Gastrocnemius medialis (tissue), 4 donors: ENCODE measurements at regions of chr16 and their contacts with region 1.

Region 1: DNA sequence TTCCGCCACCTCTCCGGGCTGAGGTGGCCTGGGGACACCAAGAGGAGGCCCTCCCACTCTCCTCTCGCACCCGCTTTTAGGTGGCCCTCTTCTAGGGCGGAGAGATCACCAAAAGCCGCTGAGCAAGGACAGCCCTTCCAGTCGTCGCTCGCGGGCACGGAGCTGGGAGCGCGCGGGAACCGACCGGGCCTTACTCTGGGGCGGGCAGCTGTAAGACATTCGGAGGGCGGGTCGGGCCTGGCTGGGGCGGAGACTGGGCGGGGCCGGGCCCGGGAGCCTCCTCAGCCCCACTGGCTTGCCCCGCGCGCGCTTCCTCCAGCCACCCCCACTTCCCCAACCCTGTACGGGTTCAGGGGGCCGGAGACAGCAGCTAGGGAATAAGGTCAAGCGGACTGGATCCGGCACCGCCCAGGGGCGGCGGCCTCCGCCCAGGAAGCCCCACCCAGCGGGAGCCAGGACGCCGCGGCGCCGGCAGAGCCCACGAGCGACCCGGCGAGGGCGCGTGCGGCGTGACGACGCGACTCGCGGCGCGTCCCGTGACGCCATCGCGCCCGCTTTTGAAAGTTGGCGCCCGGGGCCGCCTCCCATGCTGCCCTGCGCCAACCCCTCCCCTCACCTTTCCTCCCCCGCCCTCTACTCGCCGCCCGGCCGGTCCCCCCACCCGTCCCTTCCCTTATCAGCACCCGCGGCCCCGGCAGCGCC is 351 bp upstream of the CTCF start:
- DNase-seq: peak; percentile 96
- ATAC-seq: peak; percentile 71 to 76
- H3K4me3 ChIP-seq: peak overlapping the region; percentile 69 to 97 (median 80)
- H3K27ac ChIP-seq: peak overlapping the region; percentile 90 to 100 (median 100)
- H3K4me1 ChIP-seq: peaks cover 24 to 35% of the 10 kb centered on the region in 2 donors
- H3K27me3 ChIP-seq: no peaks in the 10 kb centered on the region
- CTCF ChIP-seq: no peak
- POLR2A ChIP-seq: peak; percentile 61 to 73

Region 2: GRCh38 chr16:67521095-67521804 is 40.7 kb before region 1 on chr16:
- in situ Hi-C with region 1: no loop called
- intact Hi-C with region 1: loop called (anchors 1 kb)
- DNase-seq: peak; percentile 90 to 94
- ATAC-seq: peak; percentile 95
- H3K4me3 ChIP-seq: peak overlapping the region; percentile 42 to 62 (median 56)
- H3K27ac ChIP-seq: peak overlapping the region; percentile 87 to 93 (median 88)
- H3K4me1 ChIP-seq: peaks cover 3 to 4% of the 10 kb centered on the region in 2 donors
- H3K27me3 ChIP-seq: no peaks in the 10 kb centered on the region
- CTCF ChIP-seq: peak; percentile 78 to 93 (median 89)
- POLR2A ChIP-seq: peak in 1 of 2 donors; percentile 14

Region 3: DNA sequence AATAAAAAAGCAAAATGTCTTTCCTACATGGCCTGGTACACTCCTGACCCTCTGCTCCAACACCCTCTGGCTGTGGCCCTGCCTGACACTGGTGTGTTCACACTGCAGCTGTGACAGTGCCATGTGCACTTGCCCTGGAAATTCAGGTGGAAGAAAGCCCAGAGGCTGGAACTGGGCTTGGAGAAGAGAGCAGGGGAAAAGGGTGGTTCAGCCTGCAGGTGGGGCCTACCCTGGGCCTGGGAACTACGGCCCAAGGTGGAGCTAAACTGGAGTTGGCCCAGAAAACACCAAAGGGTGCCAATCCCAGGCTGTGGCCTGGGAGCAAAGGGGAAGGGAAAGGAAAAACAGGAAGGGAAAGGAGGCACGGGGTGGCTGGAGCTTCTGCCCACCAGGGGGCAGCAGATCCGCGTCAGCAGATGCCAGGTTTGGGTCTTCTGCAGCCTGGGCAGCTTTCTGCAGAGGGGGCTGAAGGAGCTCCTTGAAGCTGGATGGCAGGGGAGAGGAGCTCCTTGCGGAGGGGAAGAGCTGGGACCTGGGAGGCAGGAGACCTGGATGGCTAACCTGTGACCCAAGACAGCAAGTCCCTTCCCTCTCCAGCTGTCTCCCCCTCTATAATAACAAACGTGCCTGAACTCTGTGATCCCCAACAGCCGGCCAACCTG is 15.1 kb before region 1 on chr16:
- in situ Hi-C with region 1: no loop called
- intact Hi-C with region 1: loop called (anchors 1 kb)
- DNase-seq: peak in 1 of 2 donors; percentile 69
- ATAC-seq: peak; percentile 62 to 78
- H3K4me3 ChIP-seq: no peak overlapping the region
- H3K27ac ChIP-seq: peak overlapping the region; percentile 46 to 74 (median 62)
- H3K4me1 ChIP-seq: peaks cover 39 to 51% of the 10 kb centered on the region in 2 donors
- H3K27me3 ChIP-seq: no peaks in the 10 kb centered on the region
- CTCF ChIP-seq: peak; percentile 76 to 97 (median 93)
- POLR2A ChIP-seq: no peak

Region 4: GRCh38 chr16:67641779-67642708 is 80.1 kb after region 1 on chr16:
- in situ Hi-C with region 1: loop called in 1 of 4 experiments (anchors 5 kb)
- intact Hi-C with region 1: loop called (anchors 1 kb)
- DNase-seq: peak; percentile 64 to 86
- ATAC-seq: peak; percentile 90 to 91
- H3K4me3 ChIP-seq: no peak overlapping the region
- H3K27ac ChIP-seq: peak overlapping the region; percentile 45 to 74 (median 64)
- H3K4me1 ChIP-seq: peaks cover 21 to 37% of the 10 kb centered on the region in 2 donors
- H3K27me3 ChIP-seq: peaks cover 16 to 19% (median 18%) of the 10 kb centered on the region in 3 donors
- CTCF ChIP-seq: no peak
- POLR2A ChIP-seq: peak in 1 of 2 donors; percentile 12

Region 5: DNA sequence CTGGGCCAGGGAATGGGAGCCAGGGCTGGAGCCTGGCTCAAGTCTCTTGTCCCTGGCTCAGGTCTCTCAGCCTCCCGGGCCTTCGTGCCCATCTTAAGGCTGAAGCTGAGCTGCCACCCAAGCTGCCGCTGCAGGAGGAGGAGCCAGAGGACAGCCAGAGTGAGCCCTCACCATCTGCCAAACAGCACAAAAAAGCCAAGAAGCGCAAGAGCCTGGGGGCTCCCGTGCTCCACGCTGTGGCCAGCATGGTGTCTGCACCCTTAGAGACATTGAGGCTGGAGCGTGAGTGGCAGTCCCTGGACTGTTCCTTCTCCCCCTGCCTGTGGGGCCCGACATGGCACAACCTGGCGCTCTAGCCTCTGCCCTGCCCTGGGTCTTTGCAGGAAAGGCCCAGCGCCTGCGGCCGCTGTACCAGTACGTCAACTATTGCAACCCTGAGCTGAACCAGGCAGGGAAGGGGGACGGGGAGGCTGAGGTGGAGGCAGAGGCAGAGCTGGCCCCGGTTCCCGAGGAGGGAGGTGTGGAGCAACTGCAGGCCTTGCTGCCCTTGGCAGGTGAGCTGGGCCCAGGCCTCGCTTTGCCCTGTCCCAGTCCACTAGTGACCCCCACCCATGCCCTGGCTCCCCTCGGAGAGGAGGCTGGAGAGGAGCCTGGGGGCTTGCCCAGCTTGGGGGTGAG is 106.0 kb after region 1 on chr16:
- in situ Hi-C with region 1: loop called in 2 of 4 experiments (anchors 10 kb)
- intact Hi-C with region 1: loop called (anchors 1 kb)
- DNase-seq: peak; percentile 85 to 90
- ATAC-seq: peak; percentile 75 to 87
- H3K4me3 ChIP-seq: peak overlapping the region; percentile 75 to 91 (median 86)
- H3K27ac ChIP-seq: peak overlapping the region; percentile 86 to 92 (median 92)
- H3K4me1 ChIP-seq: peaks cover 19 to 28% of the 10 kb centered on the region in 2 donors
- H3K27me3 ChIP-seq: no peaks in the 10 kb centered on the region
- CTCF ChIP-seq: peak; percentile 87 to 91 (median 90)
- POLR2A ChIP-seq: no peak

Region 6: GRCh38 chr16:67841764-67842508 is 280.0 kb after region 1 on chr16 and contains the start of gene THAP11:
- in situ Hi-C with region 1: no loop called
- intact Hi-C with region 1: loop called (anchors 10 kb)
- DNase-seq: peak; percentile 91 to 92
- ATAC-seq: peak; percentile 77 to 82
- H3K4me3 ChIP-seq: peak within 1 kb of the TSS; percentile 76 to 95 (median 78)
- H3K27ac ChIP-seq: peak within 1 kb of the TSS; percentile 98 to 100 (median 99)
- H3K4me1 ChIP-seq: peaks cover 39 to 43% of the 10 kb centered on the region in 2 donors
- H3K27me3 ChIP-seq: no peaks in the 10 kb centered on the region
- CTCF ChIP-seq: peak; percentile 76 to 91 (median 89)
- POLR2A ChIP-seq: peak; percentile 86 to 87
- total RNA-seq, gene THAP11: 61.9 to 120 (median 102) TPM